Activated CD8-positive, alpha-beta T cell treated with anti-CD3 and anti-CD28 coated beads for 36 hours (primary cell): ENCODE measurements at regions of chr4 and their contacts with region 1.

Region 1: DNA sequence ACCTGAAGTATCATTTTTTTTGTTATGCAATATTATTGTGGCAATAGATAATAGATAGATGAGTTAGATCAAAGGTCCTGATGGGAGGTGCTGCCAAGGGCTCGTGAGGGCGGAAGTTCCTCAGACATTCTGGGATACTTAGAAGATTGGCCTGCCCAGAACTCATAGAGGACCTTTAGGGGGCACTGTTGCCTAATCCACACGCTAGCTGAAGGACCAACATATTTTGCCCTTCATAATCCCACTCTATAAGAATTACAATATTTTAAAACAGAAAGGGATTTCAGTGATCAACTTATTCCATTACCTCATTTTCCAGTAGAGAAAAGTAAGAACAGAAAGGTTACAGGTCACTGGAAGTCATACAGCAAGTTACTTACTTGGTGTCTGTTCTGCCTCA is 22.9 kb upstream of the COX7B2 start:
- DNase-seq: peak; percentile 43
- ATAC-seq: peak; percentile 53
- H3K4me3 Mint-ChIP-seq: no peak overlapping the region
- H3K27ac Mint-ChIP-seq: no peak overlapping the region
- H3K4me1 Mint-ChIP-seq: no peaks in the 10 kb centered on the region
- H3K27me3 Mint-ChIP-seq: peaks cover 3% of the 10 kb centered on the region
- CTCF ChIP-seq: peak; percentile 52

Region 2: DNA sequence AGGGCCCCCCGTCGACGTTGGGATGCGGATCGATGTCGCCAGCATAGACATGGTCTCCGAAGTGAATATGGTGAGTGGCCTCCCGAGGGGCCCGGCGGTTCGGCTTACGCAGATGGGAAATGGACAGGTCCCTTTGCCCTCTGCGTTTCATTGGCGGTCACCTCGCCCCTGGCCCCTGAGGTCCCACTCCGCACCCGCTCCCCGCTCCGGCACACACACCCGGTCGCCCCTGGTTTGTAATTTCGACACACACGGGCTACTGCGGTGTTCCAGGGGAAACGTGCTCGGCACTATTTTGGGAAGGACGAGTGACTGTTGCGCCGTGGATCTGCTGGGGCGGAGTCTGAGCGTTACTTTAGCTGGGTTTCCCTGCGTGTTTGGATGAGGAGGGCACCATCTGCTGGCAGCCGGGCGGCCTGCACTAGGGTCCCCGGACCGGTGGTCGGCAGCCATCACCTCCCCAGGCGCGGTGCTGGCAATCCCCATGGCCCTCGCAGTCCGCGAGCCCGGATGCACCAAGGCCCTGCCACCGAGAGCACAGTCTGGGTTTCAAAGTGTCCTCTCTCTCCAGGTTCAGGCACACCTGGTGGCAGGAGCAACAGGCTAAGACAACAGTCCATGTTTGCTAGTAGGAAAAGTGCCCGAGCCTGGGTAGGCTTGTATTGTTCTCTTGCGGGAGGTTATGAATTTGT is 100.6 kb after region 1 on chr4:
- CTCF ChIA-PET with region 1: interaction called, 9 read pairs
- POLR2A ChIA-PET with region 1: no interaction called
- intact Hi-C with region 1: loop called (anchors 2 kb)
- DNase-seq: peak; percentile 76
- ATAC-seq: peak; percentile 92
- H3K4me3 Mint-ChIP-seq: peak overlapping the region; percentile 52
- H3K27ac Mint-ChIP-seq: no peak overlapping the region
- H3K4me1 Mint-ChIP-seq: peaks cover 19% of the 10 kb centered on the region
- H3K27me3 Mint-ChIP-seq: peaks cover 28% of the 10 kb centered on the region
- CTCF ChIP-seq: peak; percentile 77

Region 3: GRCh38 chr4:47263721-47264120 is 331.7 kb after region 1 on chr4:
- CTCF ChIA-PET with region 1: no interaction called
- POLR2A ChIA-PET with region 1: no interaction called
- intact Hi-C with region 1: no loop called
- DNase-seq: no peak
- ATAC-seq: no peak
- H3K4me3 Mint-ChIP-seq: no peak overlapping the region
- H3K27ac Mint-ChIP-seq: no peak overlapping the region
- H3K4me1 Mint-ChIP-seq: no peaks in the 10 kb centered on the region
- H3K27me3 Mint-ChIP-seq: no peaks in the 10 kb centered on the region
- CTCF ChIP-seq: no peak

Region 4: DNA sequence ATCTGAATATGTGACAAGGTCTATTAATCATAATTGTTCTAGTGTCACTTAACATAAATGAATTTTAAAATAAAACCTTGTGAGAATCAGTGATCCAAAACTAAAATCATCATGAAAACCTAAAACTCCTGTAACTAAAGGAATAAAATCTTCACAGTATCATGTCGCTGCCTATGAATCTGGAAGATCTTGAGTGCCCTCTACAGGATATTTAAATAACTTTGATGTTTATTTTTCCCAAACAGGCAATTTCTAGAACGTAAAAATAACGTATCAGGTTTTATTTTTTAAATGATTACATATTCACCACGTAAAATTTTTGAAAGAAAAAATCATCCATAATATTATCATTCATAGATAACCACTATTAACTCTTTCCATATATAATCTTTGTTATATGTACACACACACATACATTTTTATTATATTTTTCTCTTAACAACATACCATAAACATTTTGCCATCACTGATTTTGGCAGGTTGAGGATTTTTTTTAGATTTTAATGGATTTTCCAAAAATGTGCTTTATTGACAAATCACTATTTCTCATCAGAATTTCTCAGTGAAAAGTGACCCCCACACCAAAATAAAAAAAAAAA is 451.9 kb after region 1 on chr4:
- CTCF ChIA-PET with region 1: interaction called, 5 read pairs
- POLR2A ChIA-PET with region 1: no interaction called
- intact Hi-C with region 1: loop called (anchors 10 kb)
- DNase-seq: no peak
- ATAC-seq: no peak
- H3K4me3 Mint-ChIP-seq: no peak overlapping the region
- H3K27ac Mint-ChIP-seq: no peak overlapping the region
- H3K4me1 Mint-ChIP-seq: no peaks in the 10 kb centered on the region
- H3K27me3 Mint-ChIP-seq: peaks cover 8% of the 10 kb centered on the region
- CTCF ChIP-seq: peak; percentile 77